HEK293T (cell line): ENCODE measurements at regions of chr17 and their contacts with region 1.

Region 1: DNA sequence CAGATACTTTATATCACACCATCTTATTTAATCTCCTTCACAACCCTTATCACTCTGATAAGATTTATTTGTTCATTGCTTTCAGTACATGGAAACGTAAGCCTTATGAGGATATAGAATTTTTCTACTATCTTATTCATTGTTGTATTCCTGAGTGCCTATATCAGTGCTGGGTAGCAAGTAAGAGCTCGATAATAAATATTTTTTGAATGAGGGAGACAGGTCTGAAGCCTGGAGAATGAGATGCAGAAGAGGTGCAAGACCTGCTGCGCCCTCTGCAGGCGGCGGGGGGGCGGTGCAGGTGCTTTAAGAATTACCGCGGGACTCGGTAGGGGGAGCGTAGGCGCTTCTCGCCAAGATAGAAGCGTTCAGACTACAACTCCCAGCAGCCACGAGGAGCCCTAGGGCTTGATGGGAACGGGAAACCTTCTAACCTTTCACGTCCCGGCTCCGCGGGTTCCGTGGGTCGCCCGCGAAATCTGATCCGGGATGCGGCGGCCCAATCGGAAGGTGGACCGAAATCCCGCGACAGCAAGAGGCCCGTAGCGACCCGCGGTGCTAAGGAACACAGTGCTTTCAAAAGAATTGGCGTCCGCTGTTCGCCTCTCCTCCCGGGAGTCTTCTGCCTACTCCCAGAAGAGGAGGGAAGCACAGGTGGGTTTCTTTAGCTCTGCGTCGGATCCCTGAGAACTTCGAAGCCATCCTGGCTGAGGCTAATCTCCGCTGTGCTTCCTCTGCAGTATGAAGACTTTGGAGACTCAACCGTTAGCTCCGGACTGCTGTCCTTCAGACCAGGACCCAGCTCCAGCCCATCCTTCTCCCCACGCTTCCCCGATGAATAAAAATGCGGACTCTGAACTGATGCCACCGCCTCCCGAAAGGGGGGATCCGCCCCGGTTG is at the start of gene WRAP53:
- DNase-seq: peak; percentile 92

Region 2: DNA sequence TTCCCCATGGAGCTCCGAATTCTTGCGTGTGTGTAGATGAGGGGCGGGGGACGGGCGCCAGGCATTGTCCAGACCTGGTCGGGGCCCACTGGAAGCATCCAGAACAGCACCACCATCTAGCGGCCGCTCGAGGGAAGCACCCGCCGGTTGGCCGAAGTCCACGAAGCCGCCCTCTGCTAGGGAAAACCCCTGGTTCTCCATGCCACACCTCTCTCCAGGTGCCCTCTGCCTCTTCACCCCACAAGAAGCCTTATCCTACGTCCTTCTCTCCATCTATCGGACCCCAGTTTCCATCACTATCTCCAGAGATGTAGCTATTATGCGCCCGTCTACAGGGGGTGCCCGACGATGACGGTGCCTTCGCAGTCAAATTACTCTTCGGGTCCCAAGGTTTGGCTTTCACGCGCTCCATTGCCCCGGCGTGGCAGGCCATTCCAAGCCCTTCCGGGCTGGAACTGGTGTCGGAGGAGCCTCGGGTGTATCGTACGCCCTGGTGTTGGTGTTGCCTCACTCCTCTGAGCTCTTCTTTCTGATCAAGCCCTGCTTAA is 127.1 kb before region 1 on chr17:
- CTCF ChIA-PET with region 1: no interaction called
- POLR2A ChIA-PET with region 1: interaction called, 19 read pairs
- DNase-seq: peak; percentile 87

Region 3: GRCh38 chr17:7589204-7589868 is 98.8 kb before region 1 on chr17:
- CTCF ChIA-PET with region 1: interaction called, 4 read pairs
- POLR2A ChIA-PET with region 1: interaction called, 49 read pairs
- DNase-seq: no peak

Region 4: GRCh38 chr17:7632492-7632894 is 55.7 kb before region 1 on chr17:
- CTCF ChIA-PET with region 1: interaction called, 81 read pairs
- POLR2A ChIA-PET with region 1: interaction called, 236 read pairs
- DNase-seq: peak; percentile 68

Region 5: GRCh38 chr17:7667656-7668406 is 20.3 kb before region 1 on chr17:
- CTCF ChIA-PET with region 1: interaction called, 3 read pairs
- POLR2A ChIA-PET with region 1: interaction called, 23 read pairs
- DNase-seq: peak; percentile 8

Region 6: DNA sequence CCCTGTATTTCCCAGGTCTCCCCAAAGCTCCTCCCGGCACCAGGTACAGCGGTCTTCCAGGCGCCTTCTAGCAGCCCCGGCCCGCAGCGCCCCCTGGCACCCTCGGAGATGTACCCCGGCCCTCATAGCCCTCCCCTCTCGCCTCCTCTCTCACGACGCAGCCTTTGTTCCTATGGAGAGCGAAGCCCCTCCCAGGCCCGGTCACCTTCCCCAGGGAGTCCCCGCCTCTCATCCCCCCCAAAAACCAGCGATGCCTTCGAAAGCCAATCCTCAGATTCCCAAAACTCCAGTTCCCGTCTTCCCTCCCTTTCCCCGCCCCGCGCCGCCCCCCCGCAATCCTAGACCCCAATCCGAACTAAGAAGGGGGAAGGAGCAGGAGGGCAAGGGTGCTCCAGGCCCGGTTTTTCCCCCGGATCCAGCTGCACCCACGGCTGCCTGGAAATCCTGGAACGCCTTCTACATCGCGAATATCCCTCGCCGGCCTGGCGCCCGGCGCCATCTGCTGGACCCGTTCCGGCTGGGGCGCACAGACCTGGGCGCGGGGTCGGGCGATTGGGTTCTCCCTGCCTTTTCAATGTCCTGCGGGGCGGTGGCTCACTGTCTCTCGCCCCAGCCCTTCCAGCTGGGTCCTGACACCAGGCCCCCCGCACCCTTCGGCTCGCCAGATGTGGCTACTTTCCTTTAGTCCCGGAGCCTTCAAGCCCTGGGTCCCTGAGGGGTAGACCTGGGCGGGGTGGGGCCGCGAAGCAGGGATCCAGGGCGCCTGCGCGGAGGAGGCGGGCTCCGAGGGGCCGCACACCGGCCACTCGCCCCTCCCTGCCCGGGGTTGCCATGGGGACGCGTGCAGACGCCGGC is 29.0 kb after region 1 on chr17 and contains the start of gene DNAH2:
- CTCF ChIA-PET with region 1: interaction called, 8 read pairs
- POLR2A ChIA-PET with region 1: interaction called, 16 read pairs
- DNase-seq: peak; percentile 94